ENCODE measurements at regions of chr11 and their contacts with region 1.

Region 1: GRCh38 chr11:75867775-75868374 is 52.9 kb downstream of the UVRAG start:
- DNase-seq: peak; percentile 24 to 32
- H3K4me3 ChIP-seq: no peak overlapping the region
- H3K27ac ChIP-seq: no peak overlapping the region
- H3K4me1 ChIP-seq: no peaks in the 10 kb centered on the region
- H3K27me3 ChIP-seq: no peaks in the 10 kb centered on the region
- CTCF ChIP-seq: peak; percentile 60 to 89 (median 77)
- POLR2A ChIP-seq: no peak

Region 2: GRCh38 chr11:75802913-75803820 is 64.7 kb before region 1 on chr11:
- intact Hi-C with region 1: loop called (anchors 5 kb)
- DNase-seq: peak; percentile 75 to 78
- H3K4me3 ChIP-seq: no peak overlapping the region
- H3K27ac ChIP-seq: no peak overlapping the region
- H3K4me1 ChIP-seq: no peaks in the 10 kb centered on the region
- H3K27me3 ChIP-seq: no peaks in the 10 kb centered on the region
- CTCF ChIP-seq: peak; percentile 76 to 91 (median 88)
- POLR2A ChIP-seq: no peak

Region 3: GRCh38 chr11:75966546-75967287 is 98.8 kb after region 1 on chr11:
- intact Hi-C with region 1: no loop called
- DNase-seq: no peak
- H3K4me3 ChIP-seq: no peak overlapping the region
- H3K27ac ChIP-seq: no peak overlapping the region
- H3K4me1 ChIP-seq: no peaks in the 10 kb centered on the region
- H3K27me3 ChIP-seq: no peaks in the 10 kb centered on the region
- CTCF ChIP-seq: no peak
- POLR2A ChIP-seq: no peak